ENCODE measurements at regions of chr4 and their contacts with region 1.

Region 1: DNA sequence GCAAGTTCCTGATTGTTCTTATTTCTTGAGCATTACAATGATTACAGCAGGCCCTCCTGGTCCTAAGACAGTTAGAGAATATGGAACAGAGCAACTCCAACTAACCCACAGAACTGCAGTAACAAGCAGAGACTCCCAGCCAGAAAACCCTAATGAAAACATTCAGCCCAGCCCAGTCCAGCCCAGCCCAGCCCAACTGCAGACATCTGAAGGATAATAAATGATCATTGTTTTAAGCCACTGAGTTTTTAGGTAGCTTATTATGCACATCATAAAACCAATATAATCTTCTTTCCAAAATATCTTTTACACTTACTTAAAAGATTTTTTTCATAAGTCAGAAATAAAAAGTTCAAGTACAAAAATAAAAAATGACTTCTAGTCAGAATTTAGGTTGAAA is 51.3 kb downstream of the SPOCK3 start:
- DNase-seq: no peak
- ATAC-seq: no peak
- H3K4me3 ChIP-seq: no peak overlapping the region
- H3K4me3 Mint-ChIP-seq: no peak overlapping the region
- H3K27ac ChIP-seq: no peak overlapping the region
- H3K27ac Mint-ChIP-seq: no peak overlapping the region
- H3K4me1 ChIP-seq: no peaks in the 10 kb centered on the region
- H3K4me1 Mint-ChIP-seq: no peaks in the 10 kb centered on the region
- H3K27me3 ChIP-seq: no peaks in the 10 kb centered on the region
- H3K27me3 Mint-ChIP-seq: no peaks in the 10 kb centered on the region
- CTCF ChIP-seq: no peak

Region 2: GRCh38 chr4:166594326-166594946 is 588.6 kb before region 1 on chr4:
- CTCF ChIA-PET with region 1: no interaction called
- POLR2A ChIA-PET with region 1: no interaction called
- intact Hi-C with region 1: no loop called
- DNase-seq: no peak
- ATAC-seq: no peak
- H3K4me3 ChIP-seq: no peak overlapping the region
- H3K4me3 Mint-ChIP-seq: no peak overlapping the region
- H3K27ac ChIP-seq: no peak overlapping the region
- H3K27ac Mint-ChIP-seq: no peak overlapping the region
- H3K4me1 ChIP-seq: no peaks in the 10 kb centered on the region
- H3K4me1 Mint-ChIP-seq: no peaks in the 10 kb centered on the region
- H3K27me3 ChIP-seq: no peaks in the 10 kb centered on the region
- H3K27me3 Mint-ChIP-seq: no peaks in the 10 kb centered on the region
- CTCF ChIP-seq: no peak

Region 3: GRCh38 chr4:167196344-167197012 is 13.4 kb after region 1 on chr4:
- CTCF ChIA-PET with region 1: no interaction called
- POLR2A ChIA-PET with region 1: no interaction called
- intact Hi-C with region 1: loop called (anchors 1 kb)
- DNase-seq: no peak
- ATAC-seq: no peak
- H3K4me3 ChIP-seq: no peak overlapping the region
- H3K4me3 Mint-ChIP-seq: no peak overlapping the region
- H3K27ac ChIP-seq: no peak overlapping the region
- H3K27ac Mint-ChIP-seq: no peak overlapping the region
- H3K4me1 ChIP-seq: no peaks in the 10 kb centered on the region
- H3K4me1 Mint-ChIP-seq: no peaks in the 10 kb centered on the region
- H3K27me3 ChIP-seq: no peaks in the 10 kb centered on the region
- H3K27me3 Mint-ChIP-seq: no peaks in the 10 kb centered on the region
- CTCF ChIP-seq: no peak

Region 4: GRCh38 chr4:168039593-168039992 is 856.6 kb after region 1 on chr4:
- CTCF ChIA-PET with region 1: no interaction called
- POLR2A ChIA-PET with region 1: no interaction called
- intact Hi-C with region 1: no loop called
- DNase-seq: no peak
- ATAC-seq: no peak
- H3K4me3 ChIP-seq: no peak overlapping the region
- H3K4me3 Mint-ChIP-seq: no peak overlapping the region
- H3K27ac ChIP-seq: no peak overlapping the region
- H3K27ac Mint-ChIP-seq: no peak overlapping the region
- H3K4me1 ChIP-seq: no peaks in the 10 kb centered on the region
- H3K4me1 Mint-ChIP-seq: no peaks in the 10 kb centered on the region
- H3K27me3 ChIP-seq: no peaks in the 10 kb centered on the region
- H3K27me3 Mint-ChIP-seq: no peaks in the 10 kb centered on the region
- CTCF ChIP-seq: no peak